ENCODE measurements at regions of chr2 and their contacts with region 1.

Region 1: GRCh38 chr2:72887754-72888437 is 688 bp downstream of the SPR start:
- DNase-seq: no peak
- H3K4me3 ChIP-seq: peak overlapping the region; percentile 67
- CTCF ChIP-seq: peak; percentile 90

Region 2: GRCh38 chr2:72630767-72631166 is 257.1 kb before region 1 on chr2:
- CTCF ChIA-PET with region 1: no interaction called
- POLR2A ChIA-PET with region 1: no interaction called
- DNase-seq: no peak
- H3K4me3 ChIP-seq: no peak overlapping the region
- CTCF ChIP-seq: no peak

Region 3: DNA sequence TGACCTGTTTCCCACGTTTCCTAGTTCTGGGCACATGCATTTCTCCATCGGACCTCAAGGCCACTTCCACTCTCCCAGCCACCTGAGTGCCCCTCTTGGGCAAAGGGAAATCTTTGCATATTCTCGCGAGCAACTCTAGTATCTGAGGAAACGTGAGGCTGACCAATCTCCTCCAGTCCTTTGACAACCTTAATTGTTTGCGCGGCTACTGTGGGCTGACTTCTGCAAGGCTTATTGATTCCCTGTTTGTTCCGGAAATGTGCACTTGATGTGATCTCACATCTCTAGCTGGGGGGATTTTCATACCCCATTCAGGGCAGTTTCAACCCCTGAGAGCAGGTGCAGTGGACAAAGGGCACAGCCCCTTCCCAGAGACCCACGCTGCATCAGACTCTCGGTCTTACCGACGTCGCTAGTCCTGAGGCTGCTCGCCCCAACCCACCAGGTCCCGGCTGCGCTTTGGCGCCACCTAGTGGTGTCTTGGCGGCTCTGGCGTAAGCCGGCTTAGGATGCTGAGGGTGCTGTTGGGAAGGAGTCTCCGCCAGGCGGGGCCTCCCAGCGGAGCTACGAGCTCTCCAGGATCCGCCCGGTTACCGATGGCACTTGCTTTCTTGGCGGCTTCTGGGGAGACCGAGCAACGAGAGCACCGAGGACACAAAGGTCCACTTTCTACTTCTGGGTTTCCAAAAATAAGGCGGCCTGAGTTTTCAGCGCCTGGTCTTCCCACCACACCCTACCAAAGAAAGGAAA is 25.5 kb before region 1 on chr2:
- CTCF ChIA-PET with region 1: interaction called, 44 read pairs
- POLR2A ChIA-PET with region 1: no interaction called
- DNase-seq: peak; percentile 38
- H3K4me3 ChIP-seq: peak overlapping the region; percentile 39
- CTCF ChIP-seq: peak; percentile 100

Region 4: GRCh38 chr2:72924353-72925240 is 36.7 kb after region 1 on chr2:
- CTCF ChIA-PET with region 1: interaction called, 38 read pairs
- POLR2A ChIA-PET with region 1: no interaction called
- DNase-seq: no peak
- H3K4me3 ChIP-seq: no peak overlapping the region
- CTCF ChIP-seq: no peak

Region 5: GRCh38 chr2:72963423-72964145 is 75.7 kb after region 1 on chr2:
- CTCF ChIA-PET with region 1: interaction called, 502 read pairs
- POLR2A ChIA-PET with region 1: no interaction called
- DNase-seq: no peak
- H3K4me3 ChIP-seq: no peak overlapping the region
- CTCF ChIP-seq: no peak

Region 6: DNA sequence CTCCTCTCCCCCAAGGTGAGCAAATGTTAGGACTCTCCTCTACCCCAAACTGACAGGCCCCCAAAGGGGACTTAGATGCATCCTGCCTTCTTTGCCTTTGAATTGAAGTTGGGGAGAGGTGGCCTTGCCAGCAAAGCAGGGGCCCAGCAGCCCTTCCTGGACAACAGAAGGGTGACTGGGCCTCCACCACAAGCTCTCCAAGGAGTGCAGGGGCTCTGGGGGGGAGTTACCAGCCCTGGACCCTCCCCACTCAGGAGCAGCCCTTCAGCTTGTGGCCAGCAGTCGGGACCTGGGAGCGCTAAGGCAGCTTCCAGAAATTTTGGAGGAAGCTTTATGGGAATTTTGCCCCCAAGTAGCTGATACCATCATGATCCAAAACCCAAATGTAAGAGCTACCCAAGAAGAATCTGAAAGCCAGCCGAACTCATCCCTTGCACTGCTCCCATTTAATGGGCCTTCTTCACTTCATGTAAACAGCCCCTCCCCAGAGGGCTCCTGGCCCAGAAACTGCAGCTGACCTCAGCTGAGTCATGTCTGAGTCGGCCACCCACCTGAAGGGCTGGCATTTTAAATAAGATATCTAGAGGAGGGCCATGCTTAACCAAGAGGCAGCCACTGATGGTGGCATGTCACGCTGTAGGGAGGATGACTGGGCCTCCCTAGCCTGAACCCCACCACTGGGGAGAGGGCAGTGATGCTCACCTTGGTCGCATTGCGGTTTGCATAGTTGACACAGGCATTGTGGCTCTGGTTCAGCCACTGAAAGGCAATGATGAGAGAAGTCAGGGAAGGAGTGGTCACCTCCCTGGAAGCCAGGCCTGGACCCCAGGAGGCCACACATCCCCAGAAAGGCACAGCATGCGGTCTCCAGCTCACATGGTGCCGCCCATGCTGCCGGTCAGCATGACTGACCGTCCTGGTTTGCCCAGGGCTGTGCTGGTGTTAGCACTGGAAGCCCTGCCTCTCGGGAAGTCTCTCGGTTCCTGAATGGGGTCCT is 112.1 kb after region 1 on chr2:
- CTCF ChIA-PET with region 1: interaction called, 10 read pairs
- POLR2A ChIA-PET with region 1: no interaction called
- DNase-seq: no peak
- H3K4me3 ChIP-seq: no peak overlapping the region
- CTCF ChIP-seq: no peak

Region 7: GRCh38 chr2:73077912-73078311 is 190.0 kb after region 1 on chr2:
- CTCF ChIA-PET with region 1: interaction called, 13 read pairs
- POLR2A ChIA-PET with region 1: no interaction called
- DNase-seq: no peak
- H3K4me3 ChIP-seq: no peak overlapping the region
- CTCF ChIP-seq: no peak

Region 8: GRCh38 chr2:73202156-73203054 is 314.5 kb after region 1 on chr2 and contains the start of gene NOTO:
- CTCF ChIA-PET with region 1: interaction called, 81 read pairs
- POLR2A ChIA-PET with region 1: no interaction called
- DNase-seq: no peak
- H3K4me3 ChIP-seq: peak within 1 kb of the TSS; percentile 16
- CTCF ChIP-seq: no peak

Region 9: DNA sequence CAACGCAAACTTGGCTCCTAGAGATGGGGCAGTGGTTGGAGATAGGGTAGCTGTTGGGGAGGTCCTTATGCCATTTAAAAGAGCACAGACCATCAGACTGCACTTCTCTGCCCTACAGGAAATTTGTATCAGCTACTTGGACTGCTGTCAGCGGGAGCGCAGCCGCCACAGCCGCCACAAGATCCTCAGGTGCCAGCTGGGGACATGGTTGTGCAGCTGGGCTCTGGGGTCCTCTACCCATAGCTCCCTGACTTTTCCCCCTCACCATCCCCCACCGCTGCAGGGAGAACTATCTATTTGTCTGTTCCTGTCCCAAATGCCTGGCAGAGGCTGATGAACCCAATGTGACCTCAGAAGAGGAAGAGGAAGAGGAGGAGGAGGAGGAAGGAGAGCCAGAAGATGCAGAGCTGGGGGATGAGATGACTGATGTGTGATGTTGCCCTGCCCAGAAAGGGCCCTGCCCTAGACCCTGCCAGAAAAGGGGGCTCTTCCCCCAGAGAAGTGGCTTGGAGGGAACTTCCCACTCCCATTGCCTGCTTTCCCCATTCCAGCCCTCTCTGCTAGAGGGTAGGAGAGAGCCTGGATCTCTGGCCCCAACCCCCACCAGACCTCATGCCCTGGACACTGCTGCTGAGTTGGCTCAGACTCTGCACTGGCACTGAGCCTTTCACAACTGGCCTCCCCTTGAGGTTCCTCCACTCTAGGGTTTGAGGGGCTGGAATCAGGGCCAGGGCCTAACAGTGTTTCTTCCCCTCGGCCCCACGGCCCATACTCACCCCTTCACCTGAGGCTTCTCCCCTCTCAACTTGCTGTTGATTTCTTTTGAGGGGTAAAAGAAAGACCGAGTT is 337.8 kb after region 1 on chr2:
- CTCF ChIA-PET with region 1: no interaction called
- POLR2A ChIA-PET with region 1: no interaction called
- DNase-seq: no peak
- H3K4me3 ChIP-seq: no peak overlapping the region
- CTCF ChIP-seq: no peak

Region 10: GRCh38 chr2:73566288-73566878 is 678.5 kb after region 1 on chr2:
- CTCF ChIA-PET with region 1: no interaction called
- POLR2A ChIA-PET with region 1: no interaction called
- DNase-seq: no peak
- H3K4me3 ChIP-seq: no peak overlapping the region
- CTCF ChIP-seq: no peak

Measured in AG04449 (cell line).